ENCODE measurements at regions of chr14 and their contacts with region 1.

Region 1: GRCh38 chr14:37230551-37231194 is 32.9 kb downstream of the MIPOL1 start:
- DNase-seq: peak; percentile 48
- ATAC-seq: peak; percentile 81
- H3K4me3 ChIP-seq: no peak overlapping the region
- H3K27ac ChIP-seq: no peak overlapping the region
- H3K4me1 ChIP-seq: no peaks in the 10 kb centered on the region
- H3K27me3 ChIP-seq: no peaks in the 10 kb centered on the region
- CTCF ChIP-seq: peak; percentile 24 to 86 (median 62); a peak in 4 of 6 replicates
- POLR2A ChIP-seq: no peak
- RAD21 ChIP-seq: peak; percentile 42

Region 2: GRCh38 chr14:36773136-36773540 is 457.5 kb before region 1 on chr14:
- CTCF ChIA-PET with region 1: interaction called, 3 read pairs
- POLR2A ChIA-PET with region 1: no interaction called
- RAD21 ChIA-PET with region 1: no interaction called
- intact Hi-C with region 1: loop called (anchors 5 kb)
- DNase-seq: peak; percentile 33
- ATAC-seq: peak; percentile 93
- H3K4me3 ChIP-seq: no peak overlapping the region
- H3K27ac ChIP-seq: no peak overlapping the region
- H3K4me1 ChIP-seq: peaks cover 3 to 6% of the 10 kb centered on the region in 2 experiments; a peak in 2 of 4 replicates
- H3K27me3 ChIP-seq: no peaks in the 10 kb centered on the region
- CTCF ChIP-seq: peak; percentile 19 to 59 (median 43); a peak in 4 of 6 replicates
- POLR2A ChIP-seq: no peak
- RAD21 ChIP-seq: peak; percentile 43

Region 3: GRCh38 chr14:37241198-37241597 is 10.5 kb after region 1 on chr14:
- CTCF ChIA-PET with region 1: interaction called, 17 read pairs
- POLR2A ChIA-PET with region 1: no interaction called
- RAD21 ChIA-PET with region 1: no interaction called
- intact Hi-C with region 1: no loop called
- DNase-seq: no peak
- ATAC-seq: no peak
- H3K4me3 ChIP-seq: no peak overlapping the region
- H3K27ac ChIP-seq: no peak overlapping the region
- H3K4me1 ChIP-seq: no peaks in the 10 kb centered on the region
- H3K27me3 ChIP-seq: no peaks in the 10 kb centered on the region
- CTCF ChIP-seq: no peak
- POLR2A ChIP-seq: no peak
- RAD21 ChIP-seq: no peak

Region 4: GRCh38 chr14:37251778-37252177 is 21.1 kb after region 1 on chr14:
- CTCF ChIA-PET with region 1: interaction called, 13 read pairs
- POLR2A ChIA-PET with region 1: no interaction called
- RAD21 ChIA-PET with region 1: no interaction called
- intact Hi-C with region 1: no loop called
- DNase-seq: no peak
- ATAC-seq: no peak
- H3K4me3 ChIP-seq: no peak overlapping the region
- H3K27ac ChIP-seq: no peak overlapping the region
- H3K4me1 ChIP-seq: no peaks in the 10 kb centered on the region
- H3K27me3 ChIP-seq: no peaks in the 10 kb centered on the region
- CTCF ChIP-seq: 0 out of 6 replicates have a peak, but pooled peaks of 1 of the 3 experiments have one; percentile 6
- POLR2A ChIP-seq: no peak
- RAD21 ChIP-seq: peak; percentile 40; the same call in 1 of the 2 replicates

Region 5: DNA sequence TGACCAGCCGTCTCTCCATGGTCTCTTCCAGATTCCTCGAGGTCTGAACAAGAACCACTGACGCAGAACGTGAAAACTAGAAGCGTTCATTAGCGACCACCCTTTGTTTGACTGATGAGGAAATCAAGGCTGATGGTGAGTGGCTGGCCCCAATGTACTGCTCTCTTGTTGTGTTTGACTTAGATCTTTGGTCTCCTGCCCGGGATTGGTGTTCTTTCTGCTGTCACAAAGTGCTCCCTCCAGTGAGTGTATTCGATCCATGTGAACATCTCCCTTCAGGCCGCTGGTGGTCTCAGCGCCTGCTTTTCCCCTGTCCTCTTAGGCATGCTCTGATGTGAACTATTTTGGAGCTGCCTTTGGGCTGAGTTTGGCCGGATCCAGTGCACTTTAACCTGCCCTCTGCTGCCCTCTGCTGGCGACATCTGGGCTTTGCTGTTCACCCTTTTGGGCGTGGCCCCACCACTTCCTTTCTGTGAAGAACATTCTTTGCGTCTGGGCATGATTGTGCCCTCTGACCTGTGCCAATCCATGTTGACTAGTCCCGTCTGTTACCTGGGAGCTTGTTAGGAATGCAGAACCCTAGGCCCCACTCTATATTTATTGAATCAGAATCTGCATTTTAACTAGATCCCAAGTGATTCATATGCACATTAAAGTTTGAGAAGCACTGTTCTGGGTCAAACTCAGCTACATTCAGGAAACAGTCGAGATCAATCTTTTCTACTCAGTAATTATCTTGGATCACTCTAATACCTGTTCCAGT is 643.9 kb after region 1 on chr14:
- CTCF ChIA-PET with region 1: interaction called, 12 read pairs
- POLR2A ChIA-PET with region 1: no interaction called
- RAD21 ChIA-PET with region 1: no interaction called
- intact Hi-C with region 1: loop called (anchors 5 kb)
- DNase-seq: peak; percentile 57
- ATAC-seq: peak; percentile 96
- H3K4me3 ChIP-seq: no peak overlapping the region
- H3K27ac ChIP-seq: no peak overlapping the region
- H3K4me1 ChIP-seq: peaks cover 0 to 4% of the 10 kb centered on the region in 2 experiments; a peak in 3 of 4 replicates
- H3K27me3 ChIP-seq: no peaks in the 10 kb centered on the region
- CTCF ChIP-seq: peak; percentile 52 to 94 (median 87); a peak in 5 of 6 replicates
- POLR2A ChIP-seq: no peak
- RAD21 ChIP-seq: peak; percentile 82

Measured in HCT116 (cell line).